SK-N-SH (cell line): ENCODE measurements at regions of chr3 and their contacts with region 1.

Region 1: DNA sequence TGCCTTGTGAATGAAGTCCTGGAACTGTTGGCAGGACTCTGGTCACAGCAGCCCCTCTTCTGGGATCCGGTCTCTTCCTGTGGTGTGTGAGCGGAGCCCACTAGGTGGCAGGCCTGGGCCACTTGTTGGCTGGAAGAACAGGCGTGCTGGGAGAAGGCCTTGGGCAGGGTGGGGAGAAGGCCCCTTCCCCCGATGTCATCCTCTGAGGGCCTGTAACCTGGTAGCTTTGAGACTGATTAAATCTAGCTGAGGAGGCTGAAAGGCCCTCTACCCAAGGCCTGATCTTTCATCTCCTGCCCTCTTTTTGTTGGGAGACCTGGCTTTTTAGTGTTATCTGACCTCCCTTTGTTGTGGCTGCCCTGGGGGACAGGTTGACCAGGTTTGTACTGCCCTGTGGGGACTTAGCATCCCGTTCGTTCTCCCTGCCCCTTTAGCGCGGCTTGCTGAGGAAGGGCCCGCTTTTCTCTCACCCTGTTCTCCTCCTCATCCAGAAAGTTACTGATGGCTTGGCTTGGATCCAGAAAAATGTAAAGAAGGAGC is 48.3 kb downstream of the CHCHD6 start:
- DNase-seq: peak; percentile 82
- H3K4me3 ChIP-seq: no peak overlapping the region; a peak in 1 of 4 replicates
- H3K27ac ChIP-seq: peak overlapping the region in 1 of 2 experiments; percentile 3; a peak in 1 of 4 replicates
- H3K4me1 ChIP-seq: peaks cover 0 to 53% of the 10 kb centered on the region in 2 experiments; a peak in 2 of 4 replicates
- H3K27me3 ChIP-seq: no peaks in the 10 kb centered on the region
- CTCF ChIP-seq: peak; percentile 93
- EP300 ChIP-seq: no peak
- RAD21 ChIP-seq: peak; percentile 98

Region 2: GRCh38 chr3:126835898-126836860 is 83.8 kb after region 1 on chr3:
- CTCF ChIA-PET with region 1: interaction called, 14 read pairs
- POLR2A ChIA-PET with region 1: no interaction called
- DNase-seq: peak; percentile 58
- H3K4me3 ChIP-seq: no peak overlapping the region
- H3K27ac ChIP-seq: peak overlapping the region in 1 of 2 experiments; percentile 43; a peak in 2 of 4 replicates
- H3K4me1 ChIP-seq: peaks cover 7 to 11% of the 10 kb centered on the region in 2 experiments; a peak in 3 of 4 replicates
- H3K27me3 ChIP-seq: no peaks in the 10 kb centered on the region
- CTCF ChIP-seq: peak; percentile 38
- EP300 ChIP-seq: no peak
- RAD21 ChIP-seq: peak; percentile 37

Region 3: DNA sequence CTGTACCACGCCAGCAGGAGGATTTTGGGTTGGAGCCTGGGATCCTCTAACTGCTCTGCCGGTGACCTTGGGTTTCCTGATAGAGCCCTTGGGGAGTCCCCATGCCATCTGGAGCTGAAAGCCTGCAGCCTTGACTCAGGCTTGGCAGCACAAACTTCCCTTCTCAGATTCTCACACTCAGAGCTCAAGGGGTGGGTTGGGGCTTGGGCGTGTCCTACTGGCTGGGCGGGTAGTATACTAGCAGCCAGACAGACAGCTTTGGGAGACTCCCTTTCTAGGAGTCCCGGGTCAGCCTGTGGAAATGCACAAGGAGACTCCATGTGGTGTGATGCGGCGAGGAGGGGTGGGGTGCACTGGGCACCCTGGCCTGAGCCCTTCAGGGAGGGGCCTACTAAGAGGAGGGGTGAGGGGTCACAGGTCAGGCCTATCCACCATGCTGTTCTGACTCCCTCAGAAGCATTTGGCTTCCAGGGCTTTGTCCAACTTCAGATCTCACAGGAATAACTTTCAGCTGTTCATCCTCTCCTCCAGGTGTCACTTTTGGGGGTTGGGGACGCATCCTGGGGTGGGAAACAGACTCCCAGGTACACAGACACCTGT is 208.9 kb after region 1 on chr3:
- CTCF ChIA-PET with region 1: interaction called, 54 read pairs
- POLR2A ChIA-PET with region 1: interaction called, 3 read pairs
- DNase-seq: no peak
- H3K4me3 ChIP-seq: no peak overlapping the region
- H3K27ac ChIP-seq: peak overlapping the region in 1 of 2 experiments; percentile 71; a peak in 2 of 4 replicates
- H3K4me1 ChIP-seq: peaks cover 0 to 47% of the 10 kb centered on the region in 2 experiments; a peak in 1 of 4 replicates
- H3K27me3 ChIP-seq: no peaks in the 10 kb centered on the region
- CTCF ChIP-seq: no peak
- EP300 ChIP-seq: no peak
- RAD21 ChIP-seq: no peak

Region 4: DNA sequence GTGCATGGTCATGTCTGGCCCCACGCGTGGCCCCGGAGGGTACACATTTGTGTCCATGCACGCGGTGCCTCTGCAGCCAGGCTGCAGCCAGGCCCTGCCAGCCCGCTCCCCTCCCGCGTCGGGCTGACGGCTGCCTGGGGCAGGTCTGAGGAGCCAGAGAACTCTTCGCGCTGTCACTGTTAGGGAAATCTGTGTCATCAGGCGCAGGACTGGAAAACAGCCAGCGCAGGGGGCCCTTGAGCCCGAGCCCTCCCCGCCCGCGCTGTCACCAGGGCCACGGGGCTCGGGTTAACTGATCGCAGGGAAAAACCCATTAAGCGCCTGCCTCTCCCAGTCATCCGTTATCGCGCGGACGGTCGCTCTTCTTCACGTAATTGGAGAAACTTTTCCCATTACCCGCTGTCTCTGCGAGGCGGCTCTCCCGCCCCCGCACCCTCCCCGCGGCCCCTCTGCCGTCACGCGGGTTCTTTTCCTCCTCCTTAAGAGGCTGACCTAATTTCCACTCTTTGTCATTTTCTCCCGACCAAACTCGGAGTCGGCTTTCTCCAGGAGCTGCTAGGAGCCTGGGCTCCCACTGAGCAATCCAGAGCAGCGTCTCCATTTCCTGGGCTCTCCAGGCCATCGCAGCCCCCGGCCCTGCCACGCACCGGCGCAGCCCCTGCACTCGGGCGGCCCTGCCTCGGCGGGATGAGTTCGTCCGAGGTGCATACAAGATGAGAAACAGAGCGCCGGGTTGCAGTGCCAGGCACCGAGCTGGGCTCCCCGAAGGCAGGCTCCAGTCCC is 383.1 kb after region 1 on chr3:
- CTCF ChIA-PET with region 1: interaction called, 11 read pairs
- POLR2A ChIA-PET with region 1: no interaction called
- DNase-seq: peak; percentile 92
- H3K4me3 ChIP-seq: peak overlapping the region; percentile 32
- H3K27ac ChIP-seq: peak overlapping the region in 1 of 2 experiments; percentile 64; a peak in 2 of 4 replicates
- H3K4me1 ChIP-seq: peaks cover 8 to 71% of the 10 kb centered on the region in 2 experiments; a peak in 2 of 4 replicates
- H3K27me3 ChIP-seq: no peaks in the 10 kb centered on the region
- CTCF ChIP-seq: no peak
- EP300 ChIP-seq: peak in 1 of 2 experiments; percentile 69; a peak in 2 of 4 replicates
- RAD21 ChIP-seq: peak; percentile 30

Region 5: GRCh38 chr3:127473244-127474024 is 721.1 kb after region 1 on chr3:
- CTCF ChIA-PET with region 1: interaction called, 13 read pairs
- POLR2A ChIA-PET with region 1: no interaction called
- DNase-seq: peak; percentile 79
- H3K4me3 ChIP-seq: no peak overlapping the region
- H3K27ac ChIP-seq: no peak overlapping the region
- H3K4me1 ChIP-seq: peaks cover 0 to 4% of the 10 kb centered on the region in 2 experiments; a peak in 1 of 4 replicates
- H3K27me3 ChIP-seq: peaks cover 2% of the 10 kb centered on the region; the same call in 1 of the 2 replicates
- CTCF ChIP-seq: peak; percentile 37; the same call in 1 of the 2 replicates
- EP300 ChIP-seq: no peak
- RAD21 ChIP-seq: peak; percentile 54